ENCODE measurements at regions of chr2 and their contacts with region 1.

Region 1: DNA sequence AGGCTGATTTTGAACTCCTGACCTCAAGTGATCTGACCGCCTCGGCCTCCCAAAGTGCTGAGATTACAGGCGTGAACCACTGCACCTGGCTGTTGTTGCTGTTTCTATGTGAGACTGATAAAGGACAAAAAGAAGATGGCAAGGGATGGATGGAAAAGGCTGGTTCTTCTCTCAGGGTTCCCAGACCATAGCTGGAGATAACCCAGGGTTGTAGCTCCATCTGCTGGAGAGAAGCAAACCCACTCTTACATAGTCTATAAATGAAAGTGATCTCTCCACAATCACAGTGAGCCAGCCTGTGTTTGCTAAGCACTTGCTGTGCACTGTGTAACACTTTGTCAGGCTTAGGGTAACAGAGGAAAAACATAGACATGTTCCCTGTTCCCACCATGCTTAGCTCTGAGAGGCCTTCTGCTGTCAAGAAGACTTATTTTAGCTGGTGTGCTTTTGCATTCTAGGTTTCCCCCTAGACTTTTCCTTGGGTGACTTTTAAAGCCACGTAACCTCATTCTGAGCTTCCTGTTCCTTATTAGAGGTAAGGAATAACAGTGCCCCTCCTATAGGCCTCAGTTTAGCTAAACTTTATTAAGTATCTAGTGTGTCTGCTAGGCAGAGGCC is 49.7 kb downstream of the LIMS1 start:
- DNase-seq: no peak
- H3K4me3 ChIP-seq: no peak overlapping the region
- H3K27ac ChIP-seq: peak overlapping the region; percentile 36
- H3K4me1 ChIP-seq: peaks cover 56% of the 10 kb centered on the region
- H3K27me3 ChIP-seq: no peaks in the 10 kb centered on the region
- CTCF ChIP-seq: peak; percentile 56 to 77 (median 73)
- POLR2A ChIP-seq: no peak

Region 2: GRCh38 chr2:108351889-108352288 is 232.1 kb before region 1 on chr2:
- intact Hi-C with region 1: loop called (anchors 5 kb)
- DNase-seq: no peak
- H3K4me3 ChIP-seq: no peak overlapping the region
- H3K27ac ChIP-seq: no peak overlapping the region
- H3K4me1 ChIP-seq: no peaks in the 10 kb centered on the region
- H3K27me3 ChIP-seq: no peaks in the 10 kb centered on the region
- CTCF ChIP-seq: no peak
- POLR2A ChIP-seq: no peak

Region 3: DNA sequence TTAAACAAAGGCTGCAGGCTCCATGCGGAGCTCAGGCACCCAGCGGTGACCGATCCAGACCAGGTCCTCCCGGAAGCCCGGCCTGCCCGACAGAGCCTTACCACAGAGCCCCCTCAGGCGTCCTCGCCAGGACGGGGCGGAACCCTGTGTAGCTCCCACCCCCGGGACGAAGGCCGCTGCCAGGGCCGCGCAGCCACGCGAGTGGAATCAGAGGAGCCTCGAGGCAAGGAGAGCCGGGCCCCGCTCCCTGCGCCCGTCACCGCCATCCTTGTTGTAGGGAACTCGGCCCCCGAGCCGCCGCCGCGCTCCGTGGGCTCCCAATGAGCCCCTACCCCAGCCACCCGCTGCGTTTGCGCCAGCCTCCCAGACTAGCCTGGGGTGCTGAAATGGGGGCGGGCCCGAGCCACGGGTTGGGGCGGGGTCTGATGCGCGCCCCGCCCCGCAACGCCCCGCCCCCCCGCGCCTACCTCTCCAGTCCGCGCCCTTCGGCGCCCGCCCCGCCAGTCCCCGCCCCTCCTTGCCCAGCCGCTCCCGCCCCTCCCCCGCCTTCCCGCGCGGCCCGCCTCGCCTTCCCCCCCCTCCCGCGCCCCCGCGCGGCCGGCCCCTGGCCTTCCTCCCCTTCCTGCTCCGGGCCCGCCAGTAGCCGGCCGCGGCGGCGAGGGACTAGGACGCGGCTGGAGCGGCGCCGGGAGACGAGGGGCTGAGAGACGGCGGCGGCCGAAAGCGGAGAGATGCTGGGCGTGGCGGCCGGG is 50.0 kb before region 1 on chr2 and contains the start of gene LIMS1:
- intact Hi-C with region 1: loop called (anchors 10 kb)
- DNase-seq: peak in 1 of 2 donors; percentile 93
- H3K4me3 ChIP-seq: peak within 1 kb of the TSS; percentile 82 to 89
- H3K27ac ChIP-seq: peak within 1 kb of the TSS; percentile 98
- H3K4me1 ChIP-seq: peaks cover 35% of the 10 kb centered on the region
- H3K27me3 ChIP-seq: no peaks in the 10 kb centered on the region
- CTCF ChIP-seq: no peak
- POLR2A ChIP-seq: peak in 1 of 2 donors; percentile 94
- total RNA-seq, gene LIMS1: 66.0 TPM

Region 4: GRCh38 chr2:109209412-109209811 is 625.4 kb after region 1 on chr2:
- intact Hi-C with region 1: no loop called
- DNase-seq: no peak
- H3K4me3 ChIP-seq: no peak overlapping the region
- H3K27ac ChIP-seq: peak overlapping the region; percentile 0
- H3K4me1 ChIP-seq: peaks cover 44% of the 10 kb centered on the region
- H3K27me3 ChIP-seq: no peaks in the 10 kb centered on the region
- CTCF ChIP-seq: no peak
- POLR2A ChIP-seq: no peak

Region 5: GRCh38 chr2:110157153-110157793 is 1573.3 kb after region 1 on chr2:
- intact Hi-C with region 1: no loop called
- DNase-seq: no peak
- H3K4me3 ChIP-seq: no peak overlapping the region
- H3K27ac ChIP-seq: no peak overlapping the region
- H3K4me1 ChIP-seq: no peaks in the 10 kb centered on the region
- H3K27me3 ChIP-seq: no peaks in the 10 kb centered on the region
- CTCF ChIP-seq: peak; percentile 55 to 68 (median 65)
- POLR2A ChIP-seq: no peak